Right ventricle myocardium superior (tissue), 1 donor: ENCODE measurements at regions of chr11 and their contacts with region 1.

Region 1: GRCh38 chr11:75896843-75897419 is 81.9 kb downstream of the UVRAG start:
- DNase-seq: no peak
- ATAC-seq: peak; percentile 55

Region 2: DNA sequence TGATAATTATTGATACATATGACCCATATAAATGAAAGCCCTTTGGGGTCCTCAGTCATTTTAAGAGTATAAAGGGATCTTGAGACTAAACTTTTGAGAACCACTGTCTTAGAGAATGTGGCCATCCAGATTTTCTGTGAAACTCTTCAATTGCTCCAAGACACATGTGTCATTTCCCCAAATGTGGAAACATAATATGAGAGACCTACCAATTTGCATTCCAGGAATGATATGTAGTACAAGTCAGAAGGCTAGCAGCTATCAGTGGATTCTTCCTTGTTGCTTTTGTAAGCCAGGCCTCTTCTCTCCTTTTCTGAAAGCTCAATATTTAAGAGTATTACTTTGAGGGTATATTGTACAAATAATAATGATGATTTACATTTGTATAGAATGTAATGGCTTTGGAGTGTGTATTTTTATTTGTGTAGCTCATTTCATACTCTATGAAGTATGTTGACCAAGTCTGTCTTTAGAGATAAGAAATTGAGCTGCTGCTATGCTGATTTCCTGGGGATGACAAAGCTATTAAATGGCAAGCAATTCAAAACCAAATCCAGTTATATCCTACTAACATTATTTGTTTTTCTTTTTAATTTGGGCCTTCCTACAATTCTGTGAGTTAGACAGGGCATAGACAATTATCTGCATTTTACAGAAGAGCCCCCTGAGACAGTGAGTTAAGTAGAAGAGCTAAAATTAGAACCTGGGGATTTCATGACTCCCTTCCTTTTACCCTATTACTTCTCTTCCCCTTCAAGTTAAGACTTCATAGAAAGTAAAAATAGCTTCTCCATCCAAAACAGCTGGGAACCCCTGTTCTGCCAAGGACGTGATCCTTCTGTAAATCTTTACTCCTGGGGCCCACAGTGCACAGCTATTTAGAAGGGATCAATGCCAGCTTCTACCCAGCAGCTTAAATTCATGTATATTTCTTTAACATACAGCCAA is 177.5 kb after region 1 on chr11:
- intact Hi-C with region 1: no loop called
- DNase-seq: no peak
- ATAC-seq: peak; percentile 55

Region 3: DNA sequence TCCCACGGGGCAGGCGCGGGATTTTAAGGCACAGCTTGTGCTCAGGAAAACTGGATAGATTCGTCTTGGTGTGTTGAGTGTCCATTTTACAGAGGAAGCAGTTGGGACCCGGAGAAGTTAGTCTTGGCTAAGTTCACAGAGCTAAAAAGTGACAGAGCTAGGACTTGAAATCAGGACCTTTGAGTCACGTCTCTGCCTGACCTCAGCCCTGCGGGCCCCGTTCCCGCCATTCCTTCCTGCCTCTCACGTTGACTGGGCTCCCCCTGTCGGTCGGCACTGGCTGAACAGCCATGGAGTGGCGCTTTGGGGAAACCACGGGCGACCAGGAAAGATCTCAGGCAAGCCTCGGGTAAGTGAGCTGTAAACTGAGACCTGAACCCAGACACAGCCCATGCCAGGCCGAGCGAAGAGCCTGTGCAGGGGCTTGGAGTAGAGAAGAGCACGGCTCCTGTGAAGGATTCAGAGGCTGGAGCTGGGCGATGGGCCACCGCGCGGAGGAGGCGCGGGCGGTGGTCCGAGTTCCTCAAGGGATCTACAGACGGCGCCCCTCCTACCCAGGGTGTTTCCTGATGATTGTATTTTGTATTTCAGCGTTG is 255.3 kb after region 1 on chr11:
- intact Hi-C with region 1: loop called (anchors 2 kb)
- DNase-seq: peak; percentile 95
- ATAC-seq: peak; percentile 93